Heart left ventricle (tissue), 16 donors: ENCODE measurements at regions of chr17 and their contacts with region 1.

Region 1: DNA sequence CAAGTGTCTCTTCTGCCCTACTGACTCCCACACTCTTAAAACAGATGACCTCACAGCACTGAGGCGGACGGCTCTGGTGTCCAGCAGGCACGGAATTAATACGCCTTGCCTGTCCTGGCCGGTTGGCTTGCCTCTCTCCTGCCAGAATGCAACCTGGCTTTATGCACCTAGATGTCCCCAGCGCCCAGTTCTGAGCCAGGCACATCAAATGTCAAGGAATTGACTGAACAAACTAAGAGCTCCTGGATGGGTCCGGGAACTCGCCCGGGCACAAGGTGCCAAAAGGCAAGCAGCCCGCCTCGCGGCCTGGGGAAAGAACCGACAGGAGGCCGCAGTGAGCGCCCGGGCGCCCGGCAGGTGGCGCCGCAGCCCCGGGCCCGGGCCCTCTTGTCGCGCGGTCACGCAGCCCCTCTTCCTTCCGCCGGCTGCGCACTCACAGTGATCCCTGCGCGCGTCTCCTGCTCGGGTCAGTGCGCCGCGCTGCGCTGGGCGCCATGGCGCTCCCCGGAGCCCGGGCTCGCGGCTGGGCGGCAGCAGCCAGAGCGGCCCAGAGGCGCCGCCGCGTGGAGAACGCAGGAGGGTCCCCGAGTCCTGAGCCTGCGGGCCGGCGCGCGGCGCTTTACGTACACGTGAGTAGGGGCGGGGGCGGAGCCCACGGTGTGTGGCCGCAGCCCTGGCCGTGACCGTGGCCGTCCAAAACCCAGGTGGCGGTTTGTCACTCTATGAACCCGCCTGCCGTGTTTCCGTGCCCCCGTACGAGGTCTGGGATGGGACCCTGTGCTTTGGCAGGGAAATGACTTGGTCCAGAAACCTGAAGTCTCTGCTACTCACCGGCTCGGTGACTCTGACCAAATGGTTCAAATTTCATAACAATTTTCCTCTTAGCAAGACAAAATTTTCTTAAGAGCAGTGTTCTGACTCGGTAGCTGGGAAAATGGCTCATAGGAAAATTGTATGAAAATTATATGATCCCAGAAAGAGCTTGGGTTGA is at the start of gene RSAD1:
- DNase-seq: peak; percentile 88 to 94 (median 89)
- ATAC-seq: peak; percentile 61 to 93 (median 83)
- H3K4me3 ChIP-seq: peak within 1 kb of the TSS; percentile 47 to 96 (median 83)
- H3K27ac ChIP-seq: peak within 1 kb of the TSS; percentile 2 to 93 (median 86)
- H3K4me1 ChIP-seq: peaks cover 0 to 51% (median 32%) of the 10 kb centered on the region in 12 donors
- H3K27me3 ChIP-seq: no peaks in the 10 kb centered on the region
- CTCF ChIP-seq: peak; percentile 80 to 98 (median 96)
- POLR2A ChIP-seq: peak in 1 of 2 donors; percentile 92
- total RNA-seq, gene RSAD1: 30.9 to 50.0 (median 42.8) TPM

Region 2: DNA sequence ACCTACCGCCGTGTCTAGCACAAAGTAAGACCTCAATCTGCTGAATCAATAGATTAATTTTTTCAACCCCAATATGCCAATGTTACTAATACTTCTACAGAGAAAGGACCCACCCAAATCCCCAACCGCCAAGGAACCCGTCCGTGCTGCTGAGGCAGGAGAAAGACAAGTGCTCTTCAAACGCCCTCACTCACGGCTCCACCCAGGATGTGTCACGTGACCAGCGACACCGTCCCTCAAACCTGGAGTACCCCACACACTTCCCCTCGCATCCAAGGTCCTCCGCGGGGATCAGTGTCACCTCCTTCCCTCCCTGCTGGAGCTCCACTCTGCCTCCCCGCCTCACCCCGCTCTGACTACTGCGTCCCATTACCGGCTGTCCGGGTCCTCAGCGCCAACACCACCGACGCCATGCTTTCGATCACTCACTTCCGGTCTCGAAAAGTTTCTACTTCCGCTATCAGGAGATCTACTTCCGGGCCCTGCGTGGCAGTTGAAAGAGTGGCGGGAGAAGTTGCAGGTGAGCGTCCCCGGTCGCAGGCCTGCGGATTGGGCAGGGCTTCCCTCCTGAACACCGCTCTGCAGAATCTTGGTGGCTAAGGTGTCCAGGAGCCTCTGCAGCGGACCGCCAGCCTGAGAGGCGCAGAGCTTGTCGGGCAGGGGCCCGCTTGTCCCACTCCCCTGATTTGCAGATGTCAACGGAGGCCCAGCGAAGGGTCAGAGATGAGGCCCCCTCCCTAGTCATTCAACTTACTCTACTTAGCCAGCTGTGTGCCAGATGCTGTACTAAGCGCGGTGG is 105.7 kb before region 1 on chr17 and contains the starts of genes EME1 and MRPL27:
- intact Hi-C with region 1: loop called in 3 of 10 experiments (anchors 10 kb)
- DNase-seq: peak; percentile 84 to 92 (median 88)
- ATAC-seq: peak; percentile 92 to 96 (median 94)
- H3K4me3 ChIP-seq: peak within 1 kb of the TSS; percentile 59 to 92 (median 73)
- H3K27ac ChIP-seq: peak within 1 kb of the TSS; percentile 86 to 97 (median 94)
- H3K4me1 ChIP-seq: peaks cover 0 to 23% (median 14%) of the 10 kb centered on the region in 12 donors
- H3K27me3 ChIP-seq: no peaks in the 10 kb centered on the region
- CTCF ChIP-seq: no peak
- POLR2A ChIP-seq: peak in 1 of 2 donors; percentile 65
- total RNA-seq, gene EME1: 0.70 to 3.4 (median 0.75) TPM in 3 of 9 donors, not detected in the others
- total RNA-seq, gene MRPL27: 52.9 to 91.6 (median 65.3) TPM

Region 3: GRCh38 chr17:50425682-50426471 is 52.8 kb before region 1 on chr17 and contains the start of gene ACSF2:
- intact Hi-C with region 1: loop called in 3 of 10 experiments (anchors 2 to 10 kb)
- DNase-seq: peak; percentile 75 to 87 (median 81)
- ATAC-seq: peak; percentile 54 to 92 (median 89)
- H3K4me3 ChIP-seq: peak within 1 kb of the TSS; percentile 45 to 94 (median 74)
- H3K27ac ChIP-seq: peak within 1 kb of the TSS in 11 of 12 donors; percentile 54 to 83 (median 78)
- H3K4me1 ChIP-seq: peaks cover 0 to 65% (median 26%) of the 10 kb centered on the region in 12 donors
- H3K27me3 ChIP-seq: no peaks in the 10 kb centered on the region
- CTCF ChIP-seq: no peak
- POLR2A ChIP-seq: peak in 1 of 2 donors; percentile 65
- total RNA-seq, gene ACSF2: 7.3 to 31.6 (median 17.4) TPM

Region 4: GRCh38 chr17:50514946-50515702 is 36.4 kb after region 1 on chr17:
- intact Hi-C with region 1: no loop called
- DNase-seq: peak in 2 of 5 donors; percentile 54 to 62
- ATAC-seq: peak in 3 of 4 donors; percentile 46 to 55 (median 49)
- H3K4me3 ChIP-seq: no peak overlapping the region
- H3K27ac ChIP-seq: peak overlapping the region in 2 of 12 donors; percentile 17 to 33
- H3K4me1 ChIP-seq: peaks cover 0 to 30% (median 8%) of the 10 kb centered on the region in 12 donors
- H3K27me3 ChIP-seq: no peaks in the 10 kb centered on the region
- CTCF ChIP-seq: no peak
- POLR2A ChIP-seq: no peak

Region 5: DNA sequence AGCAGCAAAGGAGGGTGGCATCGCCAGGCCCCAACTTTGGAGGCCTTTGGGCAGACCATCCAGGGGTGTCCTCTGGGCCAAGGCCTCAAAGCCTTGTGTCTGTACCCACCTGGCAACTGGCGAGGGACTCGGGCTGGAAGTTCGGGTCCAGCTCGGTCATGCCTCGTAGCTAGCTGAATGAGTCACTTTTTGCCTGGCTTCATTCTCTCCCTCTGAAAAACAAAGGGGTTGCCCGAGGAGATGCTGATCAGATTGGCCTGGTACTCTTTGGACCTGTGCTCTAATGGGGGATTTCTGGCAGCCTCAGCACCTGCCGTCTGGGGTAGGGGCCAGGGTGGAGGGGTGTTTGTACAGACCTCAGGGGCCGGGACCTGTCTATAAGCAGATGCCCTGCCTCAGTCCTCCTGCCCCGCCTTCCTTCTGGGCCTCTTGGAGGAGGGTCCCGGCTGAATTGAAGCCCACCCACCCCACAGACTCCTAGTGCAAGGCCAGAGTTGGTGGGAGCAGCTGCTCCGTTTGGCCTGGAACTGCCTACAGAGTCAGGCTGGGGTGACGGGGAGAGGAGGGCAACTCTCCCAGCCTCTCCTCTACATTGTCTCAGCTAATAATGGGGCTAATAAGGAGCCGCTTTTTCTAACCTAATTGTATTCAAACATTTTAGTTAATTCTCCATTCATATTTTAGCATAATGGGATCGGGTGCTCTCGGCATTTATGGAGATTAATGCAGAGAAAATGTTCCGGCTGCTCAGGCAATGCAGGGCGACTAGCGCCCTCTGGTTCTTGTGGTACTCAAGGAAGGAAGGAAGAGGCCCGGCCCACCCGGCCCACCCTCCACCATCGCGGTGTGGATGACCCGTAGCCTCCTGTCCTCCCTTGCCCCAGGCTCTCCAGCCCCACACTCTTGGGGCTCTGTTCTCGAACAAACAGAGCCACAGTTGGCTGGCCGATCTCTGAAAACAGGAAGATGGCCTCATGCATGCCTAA is 134.6 kb after region 1 on chr17:
- intact Hi-C with region 1: loop called in 1 of 10 experiments (anchors 5 kb)
- DNase-seq: no peak
- ATAC-seq: peak in 1 of 4 donors; percentile 38
- H3K4me3 ChIP-seq: no peak overlapping the region
- H3K27ac ChIP-seq: no peak overlapping the region
- H3K4me1 ChIP-seq: peaks cover 0 to 7% (median 0%) of the 10 kb centered on the region in 12 donors
- H3K27me3 ChIP-seq: peaks cover 0 to 16% (median 0%) of the 10 kb centered on the region in 9 donors
- CTCF ChIP-seq: peak in 11 of 12 donors; percentile 16 to 60 (median 45)
- POLR2A ChIP-seq: no peak

Region 6: GRCh38 chr17:50681263-50682210 is 202.9 kb after region 1 on chr17:
- intact Hi-C with region 1: loop called in 3 of 10 experiments (anchors 5 to 10 kb)
- DNase-seq: peak in 3 of 5 donors; percentile 43 to 54 (median 51)
- ATAC-seq: peak; percentile 29 to 72 (median 66)
- H3K4me3 ChIP-seq: peak overlapping the region in 3 of 12 donors; percentile 0 to 19 (median 17)
- H3K27ac ChIP-seq: peak overlapping the region in 1 of 12 donors; percentile 66
- H3K4me1 ChIP-seq: peaks cover 0 to 9% (median 5%) of the 10 kb centered on the region in 12 donors
- H3K27me3 ChIP-seq: no peaks in the 10 kb centered on the region
- CTCF ChIP-seq: peak; percentile 32 to 65 (median 47)
- POLR2A ChIP-seq: no peak